ENCODE measurements at regions of chr9 and their contacts with region 1.

Region 1: GRCh38 chr9:108761655-108762347 is 94.0 kb downstream of the ACTL7B start:
- DNase-seq: peak in 1 of 2 donors; percentile 68
- H3K4me3 ChIP-seq: no peak overlapping the region
- H3K27ac ChIP-seq: no peak overlapping the region
- H3K4me1 ChIP-seq: peaks cover 0 to 2% of the 10 kb centered on the region in 2 donors
- H3K27me3 ChIP-seq: no peaks in the 10 kb centered on the region
- CTCF ChIP-seq: peak; percentile 73 to 86 (median 75)

Region 2: GRCh38 chr9:107421947-107422793 is 1339.6 kb before region 1 on chr9:
- intact Hi-C with region 1: loop called (anchors 5 kb)
- DNase-seq: peak in 1 of 2 donors; percentile 77
- H3K4me3 ChIP-seq: no peak overlapping the region
- H3K27ac ChIP-seq: no peak overlapping the region
- H3K4me1 ChIP-seq: peaks cover 0 to 7% of the 10 kb centered on the region in 2 donors
- H3K27me3 ChIP-seq: no peaks in the 10 kb centered on the region
- CTCF ChIP-seq: peak; percentile 27 to 49 (median 31)

Region 3: GRCh38 chr9:107465467-107466451 is 1296.0 kb before region 1 on chr9:
- intact Hi-C with region 1: loop called (anchors 1 kb)
- DNase-seq: peak in 1 of 2 donors; percentile 84
- H3K4me3 ChIP-seq: peak overlapping the region; percentile 64 to 68
- H3K27ac ChIP-seq: no peak overlapping the region
- H3K4me1 ChIP-seq: no peaks in the 10 kb centered on the region
- H3K27me3 ChIP-seq: peaks cover 6% of the 10 kb centered on the region
- CTCF ChIP-seq: peak; percentile 92 to 95 (median 92)

Region 4: GRCh38 chr9:107484117-107484723 is 1277.6 kb before region 1 on chr9:
- intact Hi-C with region 1: loop called (anchors 5 kb)
- DNase-seq: no peak
- H3K4me3 ChIP-seq: peak overlapping the region in 1 of 2 donors; percentile 95
- H3K27ac ChIP-seq: no peak overlapping the region
- H3K4me1 ChIP-seq: peaks cover 0 to 6% of the 10 kb centered on the region in 2 donors
- H3K27me3 ChIP-seq: no peaks in the 10 kb centered on the region
- CTCF ChIP-seq: peak; percentile 47 to 65 (median 63)

Region 5: DNA sequence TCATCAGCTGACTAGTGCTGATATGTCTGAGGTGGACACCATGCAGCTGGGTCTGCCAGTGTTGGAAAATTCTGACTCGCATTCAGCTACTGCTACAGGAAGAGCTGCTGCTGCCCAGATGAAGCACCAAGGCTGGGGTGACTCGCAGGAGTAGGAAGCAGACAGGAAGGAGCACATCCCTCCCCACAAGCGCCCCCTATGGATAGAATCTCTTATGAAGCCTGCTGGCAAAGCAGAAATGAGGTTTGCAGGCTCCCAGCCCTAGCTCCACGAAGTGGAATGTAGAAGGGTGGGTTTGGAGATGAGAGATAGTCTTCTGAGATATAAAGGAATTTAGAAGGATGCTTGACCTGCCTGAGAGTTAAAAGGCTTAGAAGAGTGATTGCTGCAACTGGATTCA is 349.0 kb before region 1 on chr9:
- intact Hi-C with region 1: loop called (anchors 2 kb)
- DNase-seq: no peak
- H3K4me3 ChIP-seq: no peak overlapping the region
- H3K27ac ChIP-seq: no peak overlapping the region
- H3K4me1 ChIP-seq: no peaks in the 10 kb centered on the region
- H3K27me3 ChIP-seq: no peaks in the 10 kb centered on the region
- CTCF ChIP-seq: no peak

Region 6: GRCh38 chr9:108565651-108566378 is 196.0 kb before region 1 on chr9:
- intact Hi-C with region 1: loop called (anchors 5 kb)
- DNase-seq: peak in 1 of 2 donors; percentile 73
- H3K4me3 ChIP-seq: no peak overlapping the region
- H3K27ac ChIP-seq: no peak overlapping the region
- H3K4me1 ChIP-seq: peaks cover 0 to 2% of the 10 kb centered on the region in 2 donors
- H3K27me3 ChIP-seq: no peaks in the 10 kb centered on the region
- CTCF ChIP-seq: peak; percentile 68 to 90 (median 69)

Region 7: GRCh38 chr9:108727580-108728111 is 34.2 kb before region 1 on chr9:
- intact Hi-C with region 1: no loop called
- DNase-seq: peak; percentile 17 to 77
- H3K4me3 ChIP-seq: no peak overlapping the region
- H3K27ac ChIP-seq: peak overlapping the region in 1 of 2 donors; percentile 50
- H3K4me1 ChIP-seq: peaks cover 0 to 12% of the 10 kb centered on the region in 2 donors
- H3K27me3 ChIP-seq: no peaks in the 10 kb centered on the region
- CTCF ChIP-seq: no peak

Measured in ascending aorta (tissue), 2 donors.